ENCODE measurements at regions of chr12 and their contacts with region 1.

Region 1: DNA sequence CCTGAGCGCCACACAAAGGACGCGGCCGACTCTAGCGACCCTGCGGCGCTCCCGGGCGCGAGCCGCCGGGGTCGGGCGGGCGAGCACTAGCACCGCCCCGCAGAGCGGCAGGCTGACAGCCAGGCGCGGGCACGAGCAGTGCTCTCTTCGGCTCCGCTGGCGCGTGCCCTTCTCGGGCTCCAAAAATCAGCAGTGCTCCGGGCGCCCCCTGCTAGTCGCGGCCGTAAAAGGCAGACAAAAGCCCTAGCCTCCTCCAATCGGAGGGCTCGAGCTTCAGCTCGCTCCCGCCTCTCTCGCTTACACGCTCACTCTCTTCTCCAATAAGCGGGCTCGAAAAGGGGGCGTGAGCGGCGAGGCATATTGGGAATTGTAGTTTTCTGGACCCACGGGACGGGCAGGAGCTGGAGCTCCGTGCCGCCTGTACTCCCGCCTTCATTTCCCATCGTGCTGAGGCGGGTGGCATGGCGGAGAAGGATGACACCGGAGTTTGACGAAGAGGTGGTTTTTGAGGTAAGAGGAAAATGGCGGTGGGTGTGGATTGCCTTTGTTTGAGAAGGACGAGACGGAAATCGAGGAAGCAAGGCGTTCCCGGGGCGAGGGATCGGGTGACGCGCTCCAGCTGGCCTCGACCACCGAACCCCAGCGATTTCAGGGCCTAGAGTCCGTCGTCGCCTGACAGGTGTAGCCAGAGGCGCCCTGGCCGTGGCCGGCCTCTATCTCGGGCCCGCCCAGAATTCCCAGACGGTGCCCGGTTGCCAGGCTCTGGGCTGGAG is at the starts of genes FGD6 and VEZT:
- H3K4me3 Mint-ChIP-seq: peak within 1 kb of the TSS; percentile 87
- H3K27ac Mint-ChIP-seq: peak within 1 kb of the TSS; percentile 89
- H3K4me1 Mint-ChIP-seq: peaks cover 40% of the 10 kb centered on the region
- H3K27me3 Mint-ChIP-seq: no peaks in the 10 kb centered on the region

Region 2: GRCh38 chr12:95072900-95073697 is 144.5 kb before region 1 on chr12 and contains the start of gene NR2C1:
- intact Hi-C with region 1: loop called (anchors 5 kb)
- H3K4me3 Mint-ChIP-seq: peak within 1 kb of the TSS; percentile 98
- H3K27ac Mint-ChIP-seq: peak within 1 kb of the TSS; percentile 92
- H3K4me1 Mint-ChIP-seq: no peaks in the 10 kb centered on the region
- H3K27me3 Mint-ChIP-seq: no peaks in the 10 kb centered on the region

Region 3: GRCh38 chr12:95117178-95117599 is 100.4 kb before region 1 on chr12:
- intact Hi-C with region 1: loop called (anchors 1 kb)
- H3K4me3 Mint-ChIP-seq: no peak overlapping the region
- H3K27ac Mint-ChIP-seq: no peak overlapping the region
- H3K4me1 Mint-ChIP-seq: no peaks in the 10 kb centered on the region
- H3K27me3 Mint-ChIP-seq: no peaks in the 10 kb centered on the region

Region 4: DNA sequence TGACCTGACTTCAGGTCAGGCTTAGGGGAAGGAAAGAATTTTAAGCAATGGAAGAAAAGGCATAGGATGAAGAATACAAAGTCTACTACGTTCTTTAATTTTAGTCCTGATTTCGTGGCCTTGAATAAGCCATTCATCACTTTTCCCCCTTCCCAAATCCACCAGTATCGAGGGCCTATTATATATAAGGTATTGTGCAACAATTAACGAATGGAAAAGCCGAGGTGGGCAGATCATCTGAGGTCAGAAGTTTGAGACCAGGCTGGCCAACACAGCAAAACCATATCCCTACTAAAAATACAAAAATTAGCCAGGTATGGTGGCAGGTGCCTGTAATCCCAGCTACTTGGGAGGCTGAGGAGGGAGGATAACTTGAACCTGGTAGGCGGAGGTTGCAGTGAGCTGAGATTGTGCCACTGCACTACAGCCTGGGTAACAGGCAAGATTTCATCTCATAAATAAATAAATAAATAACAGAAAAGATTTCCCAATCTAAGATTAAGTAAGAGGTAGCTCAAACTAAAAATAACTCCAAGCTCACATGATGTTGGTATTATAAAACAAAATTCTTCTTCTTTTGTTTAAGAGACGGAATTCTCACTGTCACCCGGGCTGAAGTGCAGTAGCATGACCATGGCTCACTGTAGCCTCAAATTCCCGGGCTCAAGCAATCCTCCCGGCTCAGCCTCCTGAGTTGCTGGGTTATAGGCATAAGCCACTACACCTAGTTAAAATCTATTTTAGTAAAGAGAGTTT is 85.8 kb before region 1 on chr12:
- intact Hi-C with region 1: loop called (anchors 1 kb)
- H3K4me3 Mint-ChIP-seq: no peak overlapping the region
- H3K27ac Mint-ChIP-seq: no peak overlapping the region
- H3K4me1 Mint-ChIP-seq: peaks cover 6% of the 10 kb centered on the region
- H3K27me3 Mint-ChIP-seq: no peaks in the 10 kb centered on the region

Region 5: DNA sequence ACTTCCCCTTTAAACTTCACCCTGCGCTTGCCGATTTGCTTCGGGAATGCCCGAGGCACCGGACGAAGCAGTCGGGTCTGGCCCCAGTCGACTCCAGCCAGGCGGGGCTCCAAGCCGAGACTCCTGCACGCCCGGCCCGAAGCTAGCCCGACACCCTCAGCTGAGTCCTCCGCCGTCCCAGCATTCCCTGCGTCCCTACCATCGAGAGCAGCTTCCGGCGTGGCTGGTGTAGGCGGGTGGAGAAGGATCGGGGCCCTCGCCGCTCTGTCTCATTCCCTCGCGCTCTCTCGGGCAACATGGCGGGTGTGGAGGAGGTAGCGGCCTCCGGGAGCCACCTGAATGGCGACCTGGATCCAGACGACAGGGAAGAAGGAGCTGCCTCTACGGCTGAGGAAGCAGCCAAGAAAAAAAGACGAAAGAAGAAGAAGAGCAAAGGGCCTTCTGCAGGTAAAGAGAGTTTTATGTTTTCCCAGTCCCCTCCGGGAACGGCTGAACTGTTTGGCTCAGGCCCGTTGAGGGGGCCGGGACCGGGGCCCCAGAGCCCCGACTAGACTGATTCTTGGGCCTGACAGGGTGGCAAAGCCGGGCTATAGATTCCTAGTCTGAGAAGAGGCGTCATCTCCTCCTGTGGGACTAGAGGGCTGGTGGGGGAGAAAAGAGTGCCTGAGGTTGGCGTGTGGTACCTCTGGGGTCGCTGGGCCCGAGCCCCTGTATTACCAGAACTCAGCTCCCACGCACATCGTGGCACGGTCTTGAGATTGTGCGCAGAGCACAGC is 256.5 kb after region 1 on chr12 and contains the start of gene METAP2:
- intact Hi-C with region 1: loop called (anchors 2 kb)
- H3K4me3 Mint-ChIP-seq: peak within 1 kb of the TSS; percentile 99
- H3K27ac Mint-ChIP-seq: peak within 1 kb of the TSS; percentile 96
- H3K4me1 Mint-ChIP-seq: peaks cover 29% of the 10 kb centered on the region
- H3K27me3 Mint-ChIP-seq: peaks cover 4% of the 10 kb centered on the region

Measured in dendritic cell treated with granulocyte-macrophage colony-stimulating factor and Interleukin-4, amounts not matched to agents 40 ng/mL and 50 ng/mL, for 4 days (primary cell).